K562 (cell line): ENCODE measurements at regions of chr4 and their contacts with region 1.

Region 1: GRCh38 chr4:184684491-184685189 is 35.1 kb downstream of the PRIMPOL start:
- DNase-seq: peak; percentile 73 to 91 (median 82)
- ATAC-seq: peak; percentile 94
- H3K4me3 ChIP-seq: no peak overlapping the region; the same call in 1 of the 2 replicates
- H3K27ac ChIP-seq: peak overlapping the region; percentile 88
- H3K4me1 ChIP-seq: peaks cover 13% of the 10 kb centered on the region in 2 experiments; a peak in 4 of 5 replicates
- H3K27me3 ChIP-seq: no peaks in the 10 kb centered on the region
- CTCF ChIP-seq: no peak
- EP300 ChIP-seq: peak; percentile 98
- POLR2A ChIP-seq: no peak
- RAD21 ChIP-seq: peak in 1 of 2 experiments; percentile 2; a peak in 1 of 4 replicates

Region 2: DNA sequence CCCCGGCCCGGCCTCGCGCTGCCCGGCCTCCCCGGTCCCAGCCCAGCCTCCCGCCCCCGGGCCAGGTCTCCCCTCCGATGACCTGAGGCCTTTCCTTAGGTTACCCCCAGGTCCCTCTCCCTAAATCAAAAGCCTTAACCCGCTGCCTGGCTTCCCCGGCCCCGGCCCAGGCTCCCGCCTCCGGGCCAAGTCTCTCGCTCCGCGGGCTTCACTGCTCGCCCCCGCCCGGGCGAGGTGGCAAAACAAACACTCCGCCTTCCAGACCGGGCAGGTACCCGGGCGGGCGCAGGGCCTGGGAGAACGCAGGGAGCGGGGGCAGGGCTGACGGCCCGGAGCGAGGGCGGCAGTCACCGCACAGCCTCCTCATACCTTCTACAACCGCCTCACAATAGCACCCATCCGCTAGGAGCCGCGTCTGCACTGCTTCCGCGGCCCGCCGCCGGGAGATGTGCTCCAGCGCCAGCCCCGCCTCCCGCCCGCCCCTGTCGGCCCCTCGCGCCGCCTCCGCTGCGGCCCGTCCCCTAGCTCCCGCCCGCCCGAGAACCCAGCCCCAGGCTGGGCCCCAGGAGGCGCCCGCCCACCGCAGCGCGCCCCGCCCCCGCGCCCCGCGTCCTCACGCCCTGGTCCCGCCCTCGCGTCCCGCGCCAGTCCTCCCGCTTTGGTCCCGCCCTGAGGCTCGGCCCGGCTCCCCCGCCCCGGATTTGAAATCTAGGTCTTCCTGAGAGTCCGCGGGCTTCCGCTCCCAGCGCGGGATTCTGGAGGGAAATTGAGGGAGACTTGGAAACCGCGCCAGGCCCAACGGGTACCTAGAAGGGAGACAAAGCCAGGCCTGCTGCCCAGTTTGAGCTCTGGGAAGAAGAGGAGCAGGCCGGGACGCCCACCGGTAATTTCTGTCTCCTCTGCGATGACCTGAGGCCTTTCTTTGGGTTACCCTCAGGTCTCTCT is 35.3 kb before region 1 on chr4 and contains the starts of genes CASP3 and PRIMPOL:
- CTCF ChIA-PET with region 1: no interaction called
- POLR2A ChIA-PET with region 1: no interaction called
- in situ Hi-C with region 1: no loop called
- intact Hi-C with region 1: loop called (anchors 2 kb)
- DNase-seq: peak; percentile 91 to 98 (median 92)
- ATAC-seq: peak; percentile 92
- H3K4me3 ChIP-seq: peak within 1 kb of the TSS; percentile 96
- H3K27ac ChIP-seq: peak within 1 kb of the TSS; percentile 89
- H3K4me1 ChIP-seq: peaks cover 17 to 19% of the 10 kb centered on the region in 2 experiments
- H3K27me3 ChIP-seq: no peaks in the 10 kb centered on the region
- CTCF ChIP-seq: peak in 2 of 3 experiments; percentile 59 to 64; a peak in 4 of 6 replicates
- EP300 ChIP-seq: no peak
- POLR2A ChIP-seq: peak; percentile 84
- RAD21 ChIP-seq: peak; percentile 47
- polyA plus RNA-seq, gene CASP3: 17.6 to 39.3 TPM
- polyA plus RNA-seq, gene PRIMPOL: 11.0 to 14.2 TPM

Region 3: DNA sequence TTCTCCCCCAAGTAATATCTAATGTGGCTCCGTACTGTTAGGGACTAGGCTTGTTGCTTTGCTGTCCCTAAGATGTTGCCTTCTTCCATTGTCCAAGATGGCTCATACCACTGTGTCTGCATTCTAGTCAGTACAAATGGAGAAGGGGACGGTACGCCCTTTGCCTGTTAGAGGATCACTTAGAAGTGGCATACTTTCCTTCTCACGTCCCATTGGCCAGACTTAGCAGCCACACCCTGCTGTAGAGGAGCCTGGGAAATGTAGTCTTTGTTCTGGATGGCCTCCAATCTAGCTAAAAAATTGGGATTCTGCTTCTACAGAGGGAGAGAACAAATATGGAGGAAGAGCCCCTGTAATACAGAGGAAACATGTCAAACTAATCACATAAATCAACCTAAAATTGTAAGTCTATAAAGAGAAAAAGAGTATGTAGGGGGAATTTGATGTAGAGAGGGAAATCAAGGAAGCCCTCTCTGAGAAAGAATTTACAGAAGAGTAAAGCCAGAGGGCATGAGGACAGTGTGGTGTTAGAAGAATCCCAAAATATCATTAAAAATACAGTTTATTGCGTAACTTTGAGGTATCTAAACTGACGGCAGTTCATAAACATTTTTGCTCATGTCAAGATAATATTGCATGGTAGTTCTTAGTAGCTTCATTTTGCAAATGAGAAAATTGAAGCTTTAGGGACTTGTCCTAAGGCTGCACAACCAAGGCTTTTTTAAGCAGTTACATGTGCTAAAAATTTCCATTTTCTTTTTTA is 20.0 kb before region 1 on chr4:
- CTCF ChIA-PET with region 1: no interaction called
- POLR2A ChIA-PET with region 1: no interaction called
- in situ Hi-C with region 1: no loop called
- intact Hi-C with region 1: no loop called
- DNase-seq: peak; percentile 58 to 73 (median 64)
- ATAC-seq: peak; percentile 100
- H3K4me3 ChIP-seq: no peak overlapping the region
- H3K27ac ChIP-seq: no peak overlapping the region
- H3K4me1 ChIP-seq: no peaks in the 10 kb centered on the region; a peak in 1 of 5 replicates
- H3K27me3 ChIP-seq: no peaks in the 10 kb centered on the region
- CTCF ChIP-seq: no peak
- EP300 ChIP-seq: no peak
- POLR2A ChIP-seq: no peak
- RAD21 ChIP-seq: no peak